Breast epithelium (tissue), 4 donors: ENCODE measurements at regions of chr2 and their contacts with region 1.

Region 1: GRCh38 chr2:79271456-79271855 is 111.9 kb upstream of the REG3A start:
- DNase-seq: no peak
- H3K4me3 ChIP-seq: no peak overlapping the region
- H3K27ac ChIP-seq: no peak overlapping the region
- H3K4me1 ChIP-seq: no peaks in the 10 kb centered on the region
- H3K27me3 ChIP-seq: no peaks in the 10 kb centered on the region
- CTCF ChIP-seq: no peak
- POLR2A ChIP-seq: no peak

Region 2: DNA sequence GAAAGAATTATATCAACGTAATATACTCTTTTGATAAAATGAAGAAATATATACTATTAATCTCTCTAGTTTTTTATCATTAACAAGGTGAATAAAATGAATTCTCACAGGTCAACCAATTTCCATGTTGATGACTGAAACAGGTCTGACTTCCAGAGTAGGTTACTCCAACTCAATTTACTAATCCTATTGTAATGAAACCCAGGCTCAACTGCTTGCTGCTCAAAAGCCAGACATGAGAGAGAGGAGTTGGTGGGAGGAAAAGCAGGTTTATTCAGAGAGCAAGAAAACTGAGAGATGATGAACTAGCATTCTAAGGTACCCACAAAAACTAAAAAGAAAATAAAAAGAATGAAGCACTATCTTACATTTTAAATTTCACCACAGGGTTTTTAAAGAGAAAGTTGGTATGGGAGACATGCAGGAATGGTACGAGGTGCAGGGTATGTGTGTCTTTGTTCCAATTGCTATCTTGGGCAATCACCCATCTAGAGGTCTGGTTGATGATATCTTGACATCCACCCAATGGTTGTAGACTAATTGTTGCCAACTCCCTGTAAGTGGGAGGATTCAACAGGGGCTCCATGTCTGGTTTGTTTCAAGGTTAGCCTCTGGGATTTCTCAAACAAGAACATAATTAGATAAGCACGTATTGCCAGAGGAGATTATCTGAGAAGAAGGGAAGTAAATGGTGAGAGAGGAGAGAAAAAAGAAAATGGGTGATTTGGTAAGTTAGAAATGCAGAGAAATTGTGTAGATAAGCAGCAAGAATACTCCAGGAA is 717.4 kb before region 1 on chr2:
- intact Hi-C with region 1: loop called (anchors 5 kb)
- DNase-seq: no peak
- H3K4me3 ChIP-seq: no peak overlapping the region
- H3K27ac ChIP-seq: no peak overlapping the region
- H3K4me1 ChIP-seq: no peaks in the 10 kb centered on the region
- H3K27me3 ChIP-seq: no peaks in the 10 kb centered on the region
- CTCF ChIP-seq: no peak
- POLR2A ChIP-seq: no peak